Common myeloid progenitor, CD34-positive (primary cell): ENCODE measurements at regions of chr17 and their contacts with region 1.

Region 1: DNA sequence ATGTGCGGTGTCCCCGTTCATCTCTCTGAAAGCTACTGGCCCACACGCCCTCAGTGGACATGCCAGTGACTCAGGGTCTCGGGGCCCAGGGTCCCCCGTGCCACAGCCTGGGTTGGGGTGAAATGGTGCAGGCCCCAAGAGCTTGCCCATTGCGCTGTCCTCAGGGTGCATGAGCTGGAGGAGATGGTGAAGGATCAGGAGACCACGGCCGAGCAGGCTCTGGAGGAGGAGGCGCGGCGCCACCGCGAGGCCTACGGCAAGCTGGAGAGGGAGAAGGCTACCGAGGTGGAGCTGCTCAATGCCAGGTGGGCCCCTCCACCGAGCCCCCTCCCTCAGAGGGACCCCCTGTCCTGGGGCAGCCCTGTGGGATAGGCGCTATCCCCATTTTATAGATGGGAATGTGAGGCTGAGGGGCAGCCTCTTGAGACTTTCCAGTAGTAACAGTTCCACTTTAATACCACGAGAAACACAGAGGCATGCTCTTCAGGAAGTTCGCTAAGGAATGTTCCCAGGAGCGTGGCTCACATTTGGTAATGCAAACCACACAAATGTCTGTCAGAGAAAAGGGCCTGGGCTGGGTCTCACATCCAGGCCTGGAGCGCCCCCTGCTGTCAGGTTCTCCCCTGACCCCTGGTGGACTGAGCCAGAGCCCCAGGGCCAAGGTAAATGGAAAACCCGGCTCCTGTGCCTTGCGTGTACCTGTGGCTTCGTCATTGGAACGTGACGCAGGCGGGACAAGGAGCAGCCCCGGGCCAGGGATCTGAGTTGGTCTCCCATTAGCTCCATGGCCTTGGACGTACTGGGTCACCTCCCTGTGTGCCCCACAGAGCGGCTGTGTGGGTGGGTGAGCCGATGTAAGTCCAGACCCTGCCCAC is 133.7 kb downstream of the RAB11FIP4 start:
- DNase-seq: peak; percentile 68 to 80 (median 75)
- H3K4me3 ChIP-seq: no peak overlapping the region
- H3K27ac ChIP-seq: no peak overlapping the region
- H3K4me1 ChIP-seq: peaks cover 0 to 4% (median 0%) of the 10 kb centered on the region in 4 experiments
- H3K27me3 ChIP-seq: no peaks in the 10 kb centered on the region

Region 2: GRCh38 chr17:31508288-31509094 is 16.7 kb before region 1 on chr17:
- CTCF ChIA-PET with region 1: interaction called, 91 read pairs
- POLR2A ChIA-PET with region 1: interaction called, 3 read pairs
- DNase-seq: peak; percentile 72 to 90 (median 84)
- H3K4me3 ChIP-seq: peak overlapping the region; percentile 3 to 78 (median 44)
- H3K27ac ChIP-seq: peak overlapping the region in 1 of 2 experiments; percentile 51
- H3K4me1 ChIP-seq: peaks cover 0 to 41% (median 36%) of the 10 kb centered on the region in 4 experiments
- H3K27me3 ChIP-seq: no peaks in the 10 kb centered on the region